CD4-positive, alpha-beta memory T cell (primary cell): ENCODE measurements at regions of chr7 and their contacts with region 1.

Region 1: GRCh38 chr7:112789817-112790585 is at the start of gene TMEM168:
- DNase-seq: peak; percentile 83 to 90 (median 85)
- H3K4me3 ChIP-seq: peak within 1 kb of the TSS; percentile 59 to 93
- H3K4me3 Mint-ChIP-seq: peak within 1 kb of the TSS; percentile 91 to 96 (median 94)
- H3K27ac ChIP-seq: peak within 1 kb of the TSS; percentile 76
- H3K27ac Mint-ChIP-seq: peak within 1 kb of the TSS; percentile 82 to 95 (median 92)
- H3K4me1 ChIP-seq: peaks cover 16% of the 10 kb centered on the region
- H3K4me1 Mint-ChIP-seq: peaks cover 27 to 58% (median 38%) of the 10 kb centered on the region in 4 donors
- H3K27me3 ChIP-seq: no peaks in the 10 kb centered on the region
- H3K27me3 Mint-ChIP-seq: no peaks in the 10 kb centered on the region
- total RNA-seq, gene TMEM168: 25.9 to 31.9 TPM

Region 2: DNA sequence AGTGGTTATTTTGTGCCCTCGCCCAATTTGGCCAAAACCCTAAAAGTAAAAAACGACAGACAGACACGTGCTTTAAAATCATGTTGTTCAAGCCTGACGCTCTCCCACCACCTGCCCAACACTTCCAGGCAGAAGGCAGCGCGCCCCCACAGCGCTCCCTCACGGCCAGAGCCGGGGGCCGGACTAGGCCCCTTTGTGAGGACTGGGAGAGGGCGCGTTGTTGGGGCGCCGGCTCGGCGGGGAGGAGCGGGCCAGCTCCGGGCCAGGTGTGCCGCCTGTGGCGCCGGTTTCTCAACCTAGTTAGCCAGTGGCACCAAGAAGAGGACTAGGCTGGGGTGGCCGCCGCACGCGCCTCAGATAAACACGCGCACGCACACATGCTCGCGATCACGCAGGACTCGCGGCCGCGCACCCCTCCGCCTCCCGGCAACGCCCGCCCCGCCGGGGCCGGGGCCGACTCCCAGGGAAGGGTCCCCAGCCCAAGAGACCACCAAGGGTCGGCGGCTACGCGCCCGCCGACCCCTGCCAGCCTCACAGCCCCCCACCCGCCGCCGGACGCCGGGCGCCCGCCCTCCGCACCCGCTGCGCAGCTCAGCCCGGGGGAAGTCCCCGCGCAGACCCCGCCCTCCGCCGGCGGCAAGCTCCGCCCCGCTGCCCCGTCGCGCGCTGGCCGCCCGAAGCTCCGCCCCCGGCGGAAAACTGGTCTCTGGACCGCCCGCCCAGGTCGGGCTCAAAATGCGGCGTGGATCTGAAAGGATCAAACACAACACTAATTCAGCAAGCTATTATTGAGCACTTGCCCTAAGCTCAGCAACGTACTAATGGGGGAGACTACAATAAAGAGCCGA is 1227.9 kb before region 1 on chr7 and contains the start of gene IMMP2L:
- CTCF ChIA-PET with region 1: no interaction called
- POLR2A ChIA-PET with region 1: no interaction called
- intact Hi-C with region 1: loop called (anchors 1 kb)
- DNase-seq: peak; percentile 82 to 95 (median 91)
- H3K4me3 ChIP-seq: peak within 1 kb of the TSS; percentile 73 to 74
- H3K4me3 Mint-ChIP-seq: peak within 1 kb of the TSS; percentile 90 to 94 (median 92)
- H3K27ac ChIP-seq: peak within 1 kb of the TSS; percentile 76
- H3K27ac Mint-ChIP-seq: peak within 1 kb of the TSS; percentile 88 to 98 (median 95)
- H3K4me1 ChIP-seq: peaks cover 32% of the 10 kb centered on the region
- H3K4me1 Mint-ChIP-seq: peaks cover 27 to 47% (median 36%) of the 10 kb centered on the region in 4 donors
- H3K27me3 ChIP-seq: no peaks in the 10 kb centered on the region
- H3K27me3 Mint-ChIP-seq: peaks cover 3 to 5% of the 10 kb centered on the region in 2 donors
- total RNA-seq, gene IMMP2L: 29.2 to 32.2 TPM

Region 3: DNA sequence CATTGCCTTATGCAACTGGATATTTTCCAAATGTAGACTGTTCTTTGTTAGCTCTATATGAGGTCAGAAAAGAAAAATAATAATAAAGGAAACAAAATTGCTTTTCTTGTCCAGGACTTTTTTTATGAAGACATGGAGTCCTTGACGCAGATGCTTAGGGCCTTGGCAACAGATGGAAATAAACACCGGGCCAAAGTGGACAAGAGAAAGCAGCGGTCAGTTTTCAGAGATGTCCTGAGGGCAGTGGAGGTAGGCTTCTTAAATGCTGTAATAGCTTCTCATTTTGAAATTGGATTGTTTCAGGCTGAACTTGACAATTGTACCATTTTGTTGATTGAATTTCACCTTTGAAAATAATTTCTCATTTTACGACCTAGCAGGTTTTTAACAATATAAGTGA is 322.1 kb before region 1 on chr7:
- CTCF ChIA-PET with region 1: no interaction called
- POLR2A ChIA-PET with region 1: no interaction called
- intact Hi-C with region 1: loop called (anchors 5 kb)
- DNase-seq: no peak
- H3K4me3 ChIP-seq: no peak overlapping the region
- H3K4me3 Mint-ChIP-seq: no peak overlapping the region
- H3K27ac ChIP-seq: no peak overlapping the region
- H3K27ac Mint-ChIP-seq: peak overlapping the region in 2 of 7 donors; percentile 17 to 38
- H3K4me1 ChIP-seq: no peaks in the 10 kb centered on the region
- H3K4me1 Mint-ChIP-seq: peaks cover 3 to 10% (median 5%) of the 10 kb centered on the region in 4 donors
- H3K27me3 ChIP-seq: no peaks in the 10 kb centered on the region
- H3K27me3 Mint-ChIP-seq: no peaks in the 10 kb centered on the region

Region 4: GRCh38 chr7:112939574-112940314 is 149.7 kb after region 1 on chr7:
- CTCF ChIA-PET with region 1: no interaction called
- POLR2A ChIA-PET with region 1: interaction called, 16 read pairs
- intact Hi-C with region 1: loop called (anchors 2 kb)
- DNase-seq: peak; percentile 99 to 100 (median 99)
- H3K4me3 ChIP-seq: peak overlapping the region; percentile 71 to 72
- H3K4me3 Mint-ChIP-seq: peak overlapping the region; percentile 92 to 99 (median 96)
- H3K27ac ChIP-seq: peak overlapping the region; percentile 71
- H3K27ac Mint-ChIP-seq: peak overlapping the region; percentile 90 to 99 (median 97)
- H3K4me1 ChIP-seq: peaks cover 40% of the 10 kb centered on the region
- H3K4me1 Mint-ChIP-seq: peaks cover 31 to 59% (median 43%) of the 10 kb centered on the region in 4 donors
- H3K27me3 ChIP-seq: no peaks in the 10 kb centered on the region
- H3K27me3 Mint-ChIP-seq: peaks cover 0 to 4% of the 10 kb centered on the region in 2 donors

Region 5: DNA sequence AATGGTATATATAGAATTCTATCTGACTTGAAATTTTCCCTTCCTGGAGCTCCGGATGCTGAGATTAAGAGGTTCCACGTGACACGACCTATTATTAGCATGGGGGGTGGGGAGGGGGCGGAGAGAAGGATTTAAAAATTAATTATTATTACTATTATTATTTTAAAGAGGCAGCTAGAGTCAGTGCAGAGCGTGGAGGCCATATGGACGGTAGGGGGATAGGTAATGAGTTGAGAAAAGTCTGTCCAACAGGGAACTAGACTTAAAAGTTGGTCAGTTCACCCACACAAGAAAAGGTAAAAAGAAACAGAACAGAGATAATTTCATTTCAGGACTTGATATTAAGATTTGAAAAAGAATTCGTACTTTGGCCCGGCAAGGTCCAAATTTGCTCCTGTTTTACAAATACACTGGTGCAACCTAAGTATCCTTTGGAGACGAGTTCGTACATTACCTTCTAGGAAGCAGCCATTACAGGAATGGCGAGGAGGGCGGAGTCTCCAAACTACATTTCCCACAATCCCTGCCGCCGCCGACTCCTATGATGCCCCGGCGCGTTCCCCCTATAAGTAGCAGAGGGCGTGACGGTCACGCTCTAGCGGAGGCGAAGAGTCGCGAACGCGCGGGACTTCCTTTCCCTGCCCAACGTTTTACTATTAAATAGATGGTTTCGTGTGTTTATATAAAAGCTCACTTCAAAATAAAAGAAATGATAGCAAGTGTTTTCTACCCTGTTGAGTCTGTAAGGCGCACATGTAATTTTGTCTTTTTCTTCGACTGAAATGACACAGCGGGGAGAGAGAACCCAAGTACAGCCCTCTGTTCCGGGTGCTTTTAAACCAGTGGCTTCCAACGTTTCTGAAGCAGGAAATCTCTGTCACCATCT is 328.3 kb after region 1 on chr7 and contains the start of gene SMIM30:
- CTCF ChIA-PET with region 1: no interaction called
- POLR2A ChIA-PET with region 1: interaction called, 3 read pairs
- intact Hi-C with region 1: loop called (anchors 1 kb)
- DNase-seq: peak; percentile 85 to 89 (median 87)
- H3K4me3 ChIP-seq: peak within 1 kb of the TSS; percentile 65 to 70
- H3K4me3 Mint-ChIP-seq: peak within 1 kb of the TSS; percentile 94 to 99 (median 96)
- H3K27ac ChIP-seq: peak within 1 kb of the TSS; percentile 70
- H3K27ac Mint-ChIP-seq: peak within 1 kb of the TSS; percentile 84 to 99 (median 98)
- H3K4me1 ChIP-seq: peaks cover 13% of the 10 kb centered on the region
- H3K4me1 Mint-ChIP-seq: peaks cover 11 to 24% (median 14%) of the 10 kb centered on the region in 4 donors
- H3K27me3 ChIP-seq: no peaks in the 10 kb centered on the region
- H3K27me3 Mint-ChIP-seq: no peaks in the 10 kb centered on the region
- total RNA-seq, gene SMIM30: 21.6 to 21.8 TPM